ENCODE measurements at regions of chr12 and their contacts with region 1.

Region 1: DNA sequence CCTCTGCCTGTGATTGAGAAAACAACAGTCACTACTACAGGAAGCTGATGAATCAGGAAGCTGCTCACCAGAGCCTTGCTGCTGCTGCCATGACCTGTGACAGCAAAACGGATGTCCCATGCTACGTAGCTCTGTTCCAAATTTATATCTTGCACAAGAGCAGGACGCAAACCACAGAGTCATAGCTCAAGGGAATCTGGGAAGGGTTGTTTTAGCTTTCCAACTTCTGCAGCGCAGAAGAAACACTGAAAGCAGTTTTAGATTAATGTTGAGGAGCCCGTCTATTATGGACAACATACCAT is 1.9 kb upstream of the ANKRD33 start:
- DNase-seq: peak; percentile 91 to 99 (median 99)
- H3K4me3 ChIP-seq: peak overlapping the region in 1 of 3 experiments; percentile 33
- H3K4me3 Mint-ChIP-seq: peak overlapping the region; percentile 37 to 62
- H3K27ac ChIP-seq: peak overlapping the region; percentile 53 to 59
- H3K27ac Mint-ChIP-seq: peak overlapping the region; percentile 89 to 94 (median 91)
- H3K4me1 ChIP-seq: peaks cover 55 to 70% of the 10 kb centered on the region in 2 donors
- H3K4me1 Mint-ChIP-seq: peaks cover 69% of the 10 kb centered on the region
- H3K27me3 ChIP-seq: no peaks in the 10 kb centered on the region
- H3K27me3 Mint-ChIP-seq: peaks cover 0 to 4% (median 2%) of the 10 kb centered on the region in 3 donors
- CTCF ChIP-seq: no peak

Region 2: GRCh38 chr12:51923501-51924271 is 37.7 kb after region 1 on chr12:
- intact Hi-C with region 1: loop called in 1 of 2 experiments (anchors 5 kb)
- DNase-seq: peak; percentile 34 to 69 (median 42)
- H3K4me3 ChIP-seq: peak overlapping the region in 1 of 3 experiments; percentile 60
- H3K4me3 Mint-ChIP-seq: peak overlapping the region; percentile 59 to 83
- H3K27ac ChIP-seq: peak overlapping the region; percentile 89 to 92
- H3K27ac Mint-ChIP-seq: peak overlapping the region; percentile 93 to 98 (median 96)
- H3K4me1 ChIP-seq: peaks cover 21 to 25% of the 10 kb centered on the region in 2 donors
- H3K4me1 Mint-ChIP-seq: peaks cover 38% of the 10 kb centered on the region
- H3K27me3 ChIP-seq: no peaks in the 10 kb centered on the region
- H3K27me3 Mint-ChIP-seq: peaks cover 2 to 6% (median 3%) of the 10 kb centered on the region in 3 donors
- CTCF ChIP-seq: peak; percentile 91

Region 3: DNA sequence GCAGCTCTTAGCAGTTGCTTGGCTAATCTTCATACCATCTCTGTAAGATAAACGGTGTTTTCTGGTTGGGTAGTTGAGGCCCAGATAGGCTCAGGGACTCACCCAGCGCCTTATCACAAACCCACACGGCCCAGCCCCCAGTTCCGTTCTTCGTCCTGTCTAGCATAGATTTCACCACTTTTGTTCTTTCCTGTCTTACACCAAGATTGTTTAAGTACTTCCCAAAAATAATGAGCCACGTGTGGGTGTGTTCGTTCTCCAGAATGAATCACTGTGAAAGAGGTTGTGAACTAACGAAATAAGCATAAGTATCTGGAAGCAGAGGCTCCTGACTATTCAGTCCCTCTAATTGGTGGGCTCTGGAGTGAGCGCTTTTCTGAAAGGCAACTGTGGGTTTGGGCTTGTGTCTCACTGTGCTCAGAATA is 86.9 kb after region 1 on chr12:
- intact Hi-C with region 1: loop called in 1 of 2 experiments (anchors 2 kb)
- DNase-seq: peak; percentile 90 to 98 (median 97)
- H3K4me3 ChIP-seq: peak overlapping the region; percentile 26 to 73 (median 44)
- H3K4me3 Mint-ChIP-seq: peak overlapping the region; percentile 63 to 76
- H3K27ac ChIP-seq: peak overlapping the region; percentile 87 to 97
- H3K27ac Mint-ChIP-seq: peak overlapping the region; percentile 87 to 97 (median 97)
- H3K4me1 ChIP-seq: peaks cover 84 to 91% of the 10 kb centered on the region in 2 donors
- H3K4me1 Mint-ChIP-seq: peaks cover 92% of the 10 kb centered on the region
- H3K27me3 ChIP-seq: no peaks in the 10 kb centered on the region
- H3K27me3 Mint-ChIP-seq: peaks cover 0 to 2% (median 0%) of the 10 kb centered on the region in 3 donors
- CTCF ChIP-seq: no peak

Region 4: GRCh38 chr12:51984657-51985056 is 98.7 kb after region 1 on chr12:
- intact Hi-C with region 1: no loop called
- DNase-seq: no peak
- H3K4me3 ChIP-seq: no peak overlapping the region
- H3K4me3 Mint-ChIP-seq: no peak overlapping the region
- H3K27ac ChIP-seq: no peak overlapping the region
- H3K27ac Mint-ChIP-seq: no peak overlapping the region
- H3K4me1 ChIP-seq: peaks cover 11 to 15% of the 10 kb centered on the region in 2 donors
- H3K4me1 Mint-ChIP-seq: peaks cover 14% of the 10 kb centered on the region
- H3K27me3 ChIP-seq: no peaks in the 10 kb centered on the region
- H3K27me3 Mint-ChIP-seq: no peaks in the 10 kb centered on the region
- CTCF ChIP-seq: no peak

Region 5: GRCh38 chr12:52192173-52192791 is 306.3 kb after region 1 on chr12:
- intact Hi-C with region 1: loop called in 1 of 2 experiments (anchors 10 kb)
- DNase-seq: peak; percentile 85 to 89 (median 89)
- H3K4me3 ChIP-seq: no peak overlapping the region
- H3K4me3 Mint-ChIP-seq: peak overlapping the region in 1 of 2 donors; percentile 46
- H3K27ac ChIP-seq: peak overlapping the region in 1 of 2 donors; percentile 61
- H3K27ac Mint-ChIP-seq: peak overlapping the region; percentile 82 to 98 (median 93)
- H3K4me1 ChIP-seq: peaks cover 100% of the 10 kb centered on the region in 2 donors
- H3K4me1 Mint-ChIP-seq: peaks cover 98% of the 10 kb centered on the region
- H3K27me3 ChIP-seq: no peaks in the 10 kb centered on the region
- H3K27me3 Mint-ChIP-seq: peaks cover 0 to 6% (median 1%) of the 10 kb centered on the region in 3 donors
- CTCF ChIP-seq: no peak